AG04450 (cell line): ENCODE measurements at regions of chr22 and their contacts with region 1.

Region 1: DNA sequence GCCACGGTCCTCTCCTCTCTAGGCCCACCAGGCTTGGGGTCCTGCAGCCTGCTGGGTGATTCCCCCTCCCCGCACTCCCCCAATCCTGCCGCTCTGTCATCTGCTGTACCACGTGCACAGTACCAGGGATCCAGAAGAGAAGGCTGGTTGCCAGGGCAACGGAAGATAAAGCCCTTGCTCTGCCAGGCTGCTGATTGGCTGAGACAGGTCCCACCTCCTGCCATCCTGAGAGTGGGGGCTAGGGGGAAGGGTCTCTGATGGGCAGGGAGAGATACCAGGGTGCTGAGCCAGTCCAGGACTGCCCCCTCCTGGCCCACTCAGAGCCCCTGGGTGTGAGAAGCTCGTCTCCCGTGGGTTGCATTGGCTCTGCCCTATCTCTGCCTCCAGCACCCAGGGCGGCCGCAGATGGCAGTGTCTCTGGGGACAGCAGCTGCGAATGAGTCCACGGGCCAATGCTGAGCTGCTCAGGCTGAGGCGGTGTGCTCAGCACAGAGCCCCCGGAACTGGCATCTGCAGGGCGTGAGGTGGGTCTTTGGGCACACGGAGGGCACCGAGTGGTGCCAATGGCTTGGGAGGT is at the start of gene SMIM45:
- DNase-seq: no peak
- H3K4me3 ChIP-seq: no peak within 1 kb of the TSS
- H3K27ac ChIP-seq: no peak within 1 kb of the TSS
- H3K27me3 ChIP-seq: no peaks in the 10 kb centered on the region
- CTCF ChIP-seq: no peak

Region 2: DNA sequence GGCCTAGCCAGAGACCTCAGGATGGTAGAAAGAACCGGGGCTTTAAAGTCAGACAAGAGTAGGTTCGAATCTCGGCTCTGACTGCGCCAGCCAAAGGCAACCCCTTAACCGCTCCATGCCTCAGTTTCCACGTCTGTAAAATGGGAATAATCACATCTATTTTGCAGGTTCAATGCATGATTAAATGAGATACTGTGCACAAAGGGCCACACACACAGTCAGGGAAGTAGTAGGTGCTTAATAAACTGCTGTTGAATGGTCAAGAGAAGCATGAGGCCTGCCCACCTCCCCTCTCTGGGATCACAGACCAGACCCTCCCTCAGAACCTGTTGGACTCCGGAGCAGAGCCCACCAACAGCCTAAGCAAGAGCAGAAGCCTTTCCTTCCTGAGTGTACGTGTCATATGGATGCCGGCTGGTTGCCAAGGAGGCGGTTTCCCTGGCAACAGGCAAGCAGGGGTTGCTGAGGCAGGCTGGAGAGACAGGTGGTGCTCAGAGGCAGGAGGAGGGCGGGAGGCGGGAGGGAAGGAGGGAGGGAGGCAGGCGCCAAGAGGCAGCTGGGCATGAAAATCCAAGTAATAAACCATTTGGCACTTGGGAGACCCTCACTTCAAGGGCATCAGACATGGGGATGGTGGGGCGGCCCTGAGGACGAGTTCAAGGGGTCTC is 436.3 kb after region 1 on chr22:
- CTCF ChIA-PET with region 1: no interaction called
- POLR2A ChIA-PET with region 1: no interaction called
- DNase-seq: no peak
- H3K4me3 ChIP-seq: no peak overlapping the region
- H3K27ac ChIP-seq: no peak overlapping the region
- H3K27me3 ChIP-seq: peaks cover 26% of the 10 kb centered on the region
- CTCF ChIP-seq: no peak

Region 3: DNA sequence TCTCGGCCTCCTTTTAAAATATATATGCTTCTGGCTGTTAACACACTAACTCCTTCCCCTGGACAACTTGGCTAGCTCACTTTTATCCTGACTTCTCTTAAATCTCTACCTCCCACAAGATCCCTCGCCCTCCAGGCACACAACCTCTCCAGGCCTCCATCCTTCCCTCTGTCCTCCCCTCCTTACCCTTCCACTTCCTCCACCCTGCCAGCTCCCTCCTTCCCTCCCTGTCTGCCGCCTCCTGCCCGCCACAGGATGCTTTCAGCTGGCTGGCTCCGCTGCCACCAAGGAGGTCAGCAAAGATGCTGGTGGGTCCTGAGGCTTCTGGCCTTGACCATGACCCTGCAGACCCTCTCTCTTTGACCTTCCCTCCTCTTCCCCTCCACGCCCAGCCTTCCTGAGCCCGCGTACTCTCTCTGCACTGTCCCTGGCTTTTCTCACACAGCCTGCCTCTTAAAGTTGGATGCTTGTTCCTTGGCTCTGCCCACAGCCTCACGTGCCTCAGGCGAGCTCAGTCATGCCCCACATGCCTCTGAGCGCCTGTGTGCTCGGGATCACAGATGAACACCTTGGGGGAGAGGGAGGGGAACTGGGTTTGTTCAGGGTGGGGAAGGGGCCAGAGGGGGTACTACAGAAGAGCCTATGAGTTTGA is 473.5 kb after region 1 on chr22:
- CTCF ChIA-PET with region 1: interaction called, 10 read pairs
- POLR2A ChIA-PET with region 1: no interaction called
- DNase-seq: no peak
- H3K4me3 ChIP-seq: no peak overlapping the region
- H3K27ac ChIP-seq: no peak overlapping the region
- H3K27me3 ChIP-seq: peaks cover 33% of the 10 kb centered on the region
- CTCF ChIP-seq: no peak